GM10248 (cell line): ENCODE measurements at regions of chr4 and their contacts with region 1.

Region 1: DNA sequence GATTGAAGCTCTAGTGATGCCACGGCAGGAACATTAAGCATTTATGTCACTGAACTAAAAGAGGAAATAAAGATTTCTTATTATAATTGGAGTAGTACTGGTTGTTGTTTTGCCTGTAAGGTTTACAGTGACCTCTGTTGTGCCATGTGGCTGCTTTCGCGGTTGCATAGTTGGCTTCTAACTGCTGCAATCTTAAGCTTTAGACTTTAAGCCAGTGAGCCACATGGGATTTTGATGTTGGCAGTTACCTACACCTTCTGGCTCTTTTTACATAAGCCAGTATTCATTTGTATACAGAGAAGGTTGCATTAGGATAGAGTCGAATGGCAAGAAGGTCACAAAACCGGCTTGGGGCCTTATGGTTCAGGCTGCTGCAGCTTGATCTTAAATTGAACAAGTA is 1311.6 kb downstream of the RAPGEF2 start:
- DNase-seq: no peak
- CTCF ChIP-seq: no peak

Region 2: DNA sequence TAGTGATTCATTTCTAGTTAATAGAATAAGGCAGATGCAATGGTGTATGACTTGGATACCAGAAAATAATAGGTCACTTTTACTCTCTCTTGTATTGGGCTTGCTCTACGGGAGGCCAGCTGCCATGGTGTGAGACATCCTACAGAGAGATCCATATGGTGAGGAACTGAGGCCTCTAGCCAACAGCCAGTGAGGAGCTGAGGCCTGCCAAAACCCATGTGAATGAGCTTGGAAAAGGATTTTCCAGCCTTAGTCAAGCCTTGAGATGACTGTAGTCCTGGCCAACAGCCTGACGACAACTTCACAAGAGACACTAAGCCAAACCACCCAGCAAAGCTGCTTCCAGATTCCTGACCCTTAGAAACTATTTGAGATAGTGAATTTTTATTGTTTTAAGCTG is 11.4 kb before region 1 on chr4:
- CTCF ChIA-PET with region 1: interaction called, 12 read pairs
- POLR2A ChIA-PET with region 1: no interaction called
- DNase-seq: no peak
- CTCF ChIP-seq: no peak

Region 3: GRCh38 chr4:160426233-160426632 is 11.7 kb after region 1 on chr4:
- CTCF ChIA-PET with region 1: no interaction called
- POLR2A ChIA-PET with region 1: no interaction called
- DNase-seq: no peak
- CTCF ChIP-seq: no peak